Aorta (tissue), 5 donors: ENCODE measurements at regions of chr11 and their contacts with region 1.

Region 1: GRCh38 chr11:6315811-6316425 is 4.4 kb downstream of the CAVIN3 start:
- DNase-seq: peak; percentile 73 to 79
- ATAC-seq: no peak
- H3K4me3 ChIP-seq: no peak overlapping the region
- H3K27ac ChIP-seq: no peak overlapping the region
- H3K4me1 ChIP-seq: no peaks in the 10 kb centered on the region
- H3K27me3 ChIP-seq: no peaks in the 10 kb centered on the region

Region 2: GRCh38 chr11:6234387-6235107 is 81.4 kb before region 1 on chr11 and contains the start of gene FHIP1B:
- intact Hi-C with region 1: loop called in 1 of 2 experiments (anchors 1 kb)
- DNase-seq: peak; percentile 100
- ATAC-seq: peak; percentile 99
- H3K4me3 ChIP-seq: peak within 1 kb of the TSS; percentile 77 to 80
- H3K27ac ChIP-seq: peak within 1 kb of the TSS in 1 of 2 donors; percentile 97
- H3K4me1 ChIP-seq: no peaks in the 10 kb centered on the region
- H3K27me3 ChIP-seq: no peaks in the 10 kb centered on the region
- total RNA-seq, gene FHIP1B: 27.1 to 38.7 TPM

Region 3: DNA sequence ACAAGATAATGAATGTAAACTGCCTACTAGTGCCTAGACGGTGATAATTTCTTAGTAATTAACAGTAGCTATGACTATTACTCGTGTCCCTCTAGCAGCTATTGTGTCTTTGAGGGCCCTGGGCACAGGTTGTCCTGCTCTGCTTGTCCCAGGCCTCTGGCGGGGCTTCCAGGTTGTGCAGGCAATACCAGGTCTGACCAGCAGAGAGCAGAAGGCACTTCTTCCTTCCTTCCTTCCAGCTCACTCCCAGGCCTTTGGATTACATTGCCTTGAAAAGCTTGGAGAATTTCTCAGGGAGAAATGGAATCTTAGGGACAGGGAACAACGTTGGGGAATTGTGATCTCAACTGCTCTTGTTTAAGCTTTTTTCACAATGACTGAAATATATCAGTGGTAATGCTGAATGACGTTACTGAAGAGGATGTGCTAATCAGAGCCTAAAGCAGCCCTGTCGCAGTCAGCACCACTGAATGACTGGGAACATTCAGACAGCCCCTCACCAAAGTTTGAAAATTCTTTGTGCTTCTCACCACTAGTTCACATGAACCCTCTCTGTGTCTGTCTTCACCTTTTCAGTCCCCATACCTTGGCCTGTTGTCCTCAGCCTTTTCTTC is 64.7 kb before region 1 on chr11:
- intact Hi-C with region 1: loop called (anchors 2 to 5 kb)
- DNase-seq: peak; percentile 72 to 84
- ATAC-seq: peak; percentile 94
- H3K4me3 ChIP-seq: no peak overlapping the region
- H3K27ac ChIP-seq: no peak overlapping the region
- H3K4me1 ChIP-seq: no peaks in the 10 kb centered on the region
- H3K27me3 ChIP-seq: no peaks in the 10 kb centered on the region